ENCODE measurements at regions of chr19 and their contacts with region 1.

Region 1: DNA sequence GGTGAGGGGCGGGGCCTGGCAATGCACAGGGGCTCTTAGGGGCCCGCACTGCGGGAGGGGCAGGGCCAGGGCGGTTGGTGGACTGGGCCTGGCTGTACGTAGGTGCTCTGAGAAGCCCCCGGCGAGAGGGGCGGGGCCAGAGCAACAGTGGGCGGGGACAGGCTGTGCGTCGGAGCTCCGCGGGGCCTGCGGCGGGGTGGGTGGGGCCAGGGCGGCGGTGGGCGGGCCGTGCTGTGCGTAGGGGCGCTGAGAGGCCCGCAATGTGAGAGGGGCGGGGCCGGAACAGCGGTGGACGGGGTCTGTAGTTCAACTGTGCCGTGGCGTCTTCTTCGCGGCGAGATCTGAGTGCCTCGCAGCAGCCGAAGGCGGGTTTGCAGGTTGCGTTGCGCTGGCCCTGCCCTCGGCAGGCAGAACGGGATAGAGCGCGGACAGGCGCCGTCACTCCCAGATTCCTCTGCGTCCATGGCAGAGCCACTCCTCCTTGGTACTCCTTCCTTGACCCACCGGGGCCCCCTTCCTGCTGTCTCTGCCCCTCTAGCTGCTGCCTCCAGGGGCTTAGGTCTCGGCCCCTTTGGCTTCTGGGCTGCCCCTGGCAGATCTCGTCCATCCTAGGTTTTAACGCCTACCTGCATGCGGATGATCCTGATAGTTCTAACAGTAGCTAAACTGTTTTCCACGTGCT is 33.2 kb downstream of the CCNE1 start:
- DNase-seq: peak; percentile 88
- ATAC-seq: peak; percentile 89
- H3K4me3 ChIP-seq: peak overlapping the region; percentile 79
- H3K27ac ChIP-seq: peak overlapping the region; percentile 31; the same call in 1 of the 2 replicates
- H3K4me1 ChIP-seq: peaks cover 2% of the 10 kb centered on the region; the same call in 1 of the 2 replicates
- H3K27me3 ChIP-seq: peaks cover 9% of the 10 kb centered on the region; the same call in 1 of the 2 replicates
- CTCF ChIP-seq: no peak
- POLR2A ChIP-seq: no peak
- RAD21 ChIP-seq: no peak

Region 2: DNA sequence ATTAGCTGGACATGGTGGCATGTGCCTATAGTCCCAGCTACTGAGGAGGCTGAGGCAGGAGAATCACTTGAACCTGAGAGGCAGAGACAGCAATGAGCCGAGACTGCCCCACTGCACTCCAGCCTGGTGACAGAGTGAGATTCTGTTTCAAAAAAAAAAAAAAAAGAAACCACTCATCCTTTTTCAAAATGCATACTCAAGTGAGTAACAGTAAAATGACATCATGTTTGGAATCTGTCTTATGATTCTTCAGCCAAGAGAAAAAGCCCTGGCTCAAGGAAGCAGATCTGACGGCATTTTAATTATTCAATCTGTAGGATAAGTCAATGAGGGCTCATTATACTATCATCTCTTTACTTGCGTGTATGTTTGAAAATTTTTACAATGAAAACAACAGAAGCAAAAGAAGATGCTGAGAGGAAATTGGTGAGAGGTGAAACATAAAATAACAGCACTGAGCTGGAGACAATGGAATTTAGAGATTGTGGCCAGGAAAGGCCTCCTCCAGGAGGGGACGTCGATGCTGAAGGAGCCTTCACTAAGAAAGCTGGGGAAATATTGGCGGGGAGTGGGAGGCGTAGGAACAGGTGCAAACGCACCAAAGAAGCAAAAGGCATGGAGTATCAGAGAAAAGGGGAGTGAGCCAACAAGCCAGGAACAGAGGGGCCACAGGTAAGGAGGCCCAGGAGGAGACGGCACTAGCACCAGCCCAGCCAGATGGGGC is 46.1 kb before region 1 on chr19:
- CTCF ChIA-PET with region 1: no interaction called
- POLR2A ChIA-PET with region 1: no interaction called
- dilution Hi-C with region 1: no loop called
- in situ Hi-C with region 1: no loop called
- intact Hi-C with region 1: loop called (anchors 1 kb)
- DNase-seq: peak; percentile 60
- ATAC-seq: no peak
- H3K4me3 ChIP-seq: no peak overlapping the region
- H3K27ac ChIP-seq: no peak overlapping the region
- H3K4me1 ChIP-seq: no peaks in the 10 kb centered on the region
- H3K27me3 ChIP-seq: peaks cover 3% of the 10 kb centered on the region; the same call in 1 of the 2 replicates
- CTCF ChIP-seq: no peak
- POLR2A ChIP-seq: no peak
- RAD21 ChIP-seq: no peak

Region 3: GRCh38 chr19:29811125-29812079 is 33.6 kb before region 1 on chr19 and contains the start of gene CCNE1:
- CTCF ChIA-PET with region 1: no interaction called
- POLR2A ChIA-PET with region 1: no interaction called
- dilution Hi-C with region 1: no loop called
- in situ Hi-C with region 1: loop called (anchors 5 kb)
- intact Hi-C with region 1: loop called (anchors 2 kb)
- DNase-seq: peak; percentile 74
- ATAC-seq: peak; percentile 98
- H3K4me3 ChIP-seq: peak within 1 kb of the TSS; percentile 77
- H3K27ac ChIP-seq: no peak within 1 kb of the TSS; the same call in 1 of the 2 replicates
- H3K4me1 ChIP-seq: no peaks in the 10 kb centered on the region
- H3K27me3 ChIP-seq: no peaks in the 10 kb centered on the region
- CTCF ChIP-seq: no peak
- POLR2A ChIP-seq: no peak
- RAD21 ChIP-seq: no peak
- total RNA-seq, gene CCNE1: 6.8 and 11.4 TPM in 2 replicates

Region 4: GRCh38 chr19:29904017-29904416 is 59.0 kb after region 1 on chr19:
- CTCF ChIA-PET with region 1: no interaction called
- POLR2A ChIA-PET with region 1: no interaction called
- dilution Hi-C with region 1: no loop called
- in situ Hi-C with region 1: no loop called
- intact Hi-C with region 1: no loop called
- DNase-seq: no peak
- ATAC-seq: no peak
- H3K4me3 ChIP-seq: no peak overlapping the region
- H3K27ac ChIP-seq: no peak overlapping the region
- H3K4me1 ChIP-seq: no peaks in the 10 kb centered on the region
- H3K27me3 ChIP-seq: no peaks in the 10 kb centered on the region
- CTCF ChIP-seq: no peak
- POLR2A ChIP-seq: no peak
- RAD21 ChIP-seq: no peak